Left ventricle myocardium superior (tissue), 1 donor: ENCODE measurements at regions of chr7 and their contacts with region 1.

Region 1: DNA sequence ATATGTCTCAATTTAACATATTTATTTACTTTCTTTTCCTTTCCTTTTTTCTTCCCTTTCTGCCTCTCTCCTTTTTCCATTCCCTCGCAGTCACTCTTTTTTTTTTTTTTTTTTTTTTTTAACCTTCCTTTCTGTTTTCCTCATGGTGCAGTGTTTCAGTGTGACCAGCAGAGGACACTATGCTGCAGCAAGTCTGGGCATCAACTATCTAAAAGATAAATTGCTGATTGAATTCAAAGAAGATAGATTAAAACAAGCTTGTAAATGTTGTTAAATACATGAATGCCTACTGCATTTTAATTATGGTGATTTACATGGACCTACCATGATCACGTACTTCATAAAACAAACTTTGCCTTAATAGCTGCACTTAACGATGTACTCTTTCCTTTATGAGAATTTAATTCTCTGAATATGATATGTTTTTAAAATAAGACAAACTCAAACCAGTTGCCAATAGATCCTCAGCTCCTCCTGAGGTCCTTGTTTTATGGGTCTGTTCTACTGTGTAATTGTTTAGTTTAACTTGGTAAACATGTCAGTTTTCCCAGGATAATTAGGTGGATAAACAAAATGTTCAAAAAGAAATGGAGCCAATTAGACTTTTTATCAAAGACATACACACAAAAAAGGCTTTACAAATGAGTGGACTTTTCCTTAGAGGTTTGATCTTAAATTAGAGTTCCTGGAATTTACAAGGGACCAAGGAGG is 101.0 kb upstream of the AGR3 start:
- DNase-seq: no peak
- ATAC-seq: peak; percentile 51

Region 2: GRCh38 chr7:17301471-17302456 is 319.0 kb after region 1 on chr7:
- intact Hi-C with region 1: loop called (anchors 10 kb)
- DNase-seq: no peak
- ATAC-seq: no peak

Region 3: DNA sequence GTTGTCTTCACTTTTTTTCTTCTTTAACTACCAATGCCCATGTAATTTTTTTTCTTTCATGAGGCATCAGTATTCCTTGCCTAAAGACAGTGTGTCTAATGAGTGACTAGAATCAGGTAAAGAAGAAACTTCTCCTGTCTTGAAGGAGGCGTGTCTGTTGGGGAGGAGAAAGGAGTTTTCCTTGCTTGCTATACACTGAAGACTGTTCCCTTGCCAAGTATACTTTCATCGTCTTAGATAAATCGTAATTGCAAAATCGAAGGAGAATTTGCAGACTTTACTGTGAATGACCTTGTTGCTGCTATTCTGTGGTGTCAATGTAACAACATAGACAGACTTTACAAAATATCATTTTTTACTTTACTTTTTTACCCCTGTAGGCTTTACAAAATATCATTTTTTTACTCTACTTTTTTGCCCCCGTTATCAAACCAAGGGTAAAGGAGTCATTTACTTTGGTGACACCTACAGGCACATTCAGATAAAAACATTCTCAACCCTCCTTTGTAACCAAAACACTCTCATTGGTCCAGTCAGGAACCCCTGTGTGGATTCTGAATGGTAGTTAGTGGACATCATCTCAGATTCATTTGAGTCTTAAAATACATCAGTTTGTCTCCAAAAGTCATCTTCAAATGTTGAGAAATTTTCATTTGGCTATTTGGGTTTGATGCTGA is 548.1 kb after region 1 on chr7:
- intact Hi-C with region 1: loop called (anchors 10 kb)
- DNase-seq: no peak
- ATAC-seq: peak; percentile 60

Region 4: DNA sequence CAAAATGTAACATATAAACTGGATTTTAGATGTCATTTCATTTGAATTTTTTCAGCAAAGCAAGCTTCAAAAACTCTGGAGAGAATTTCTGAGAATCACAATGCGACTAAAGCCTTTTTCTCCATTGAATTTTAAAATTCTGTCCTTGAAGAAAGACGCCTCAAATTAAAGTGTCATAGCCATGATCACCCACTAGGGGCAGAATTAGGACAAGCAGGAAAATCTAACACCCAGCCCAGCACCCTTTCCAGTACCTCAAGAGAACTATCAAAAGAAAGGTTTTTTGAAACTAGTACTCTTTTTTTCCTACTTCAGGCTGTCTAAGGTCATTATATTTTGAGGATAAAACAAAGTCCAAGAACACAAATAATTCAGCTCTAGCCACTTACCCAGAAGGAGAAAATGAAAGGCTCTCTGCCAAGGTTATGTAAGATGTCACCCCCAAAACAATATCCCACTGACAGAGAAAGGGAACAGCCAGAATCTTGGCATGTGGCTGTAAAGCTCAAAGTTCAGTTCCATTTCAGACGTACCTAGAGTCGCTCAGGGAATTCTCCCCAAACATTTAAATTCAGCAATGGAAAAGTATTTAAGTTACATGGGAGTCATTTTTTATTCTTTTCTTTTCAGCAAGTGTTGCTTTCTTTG is 658.1 kb after region 1 on chr7:
- intact Hi-C with region 1: loop called (anchors 10 kb)
- DNase-seq: no peak
- ATAC-seq: no peak